ENCODE measurements at regions of chr7 and their contacts with region 1.

Region 1: GRCh38 chr7:117830422-117830954 is 42.8 kb downstream of the CTTNBP2 start:
- DNase-seq: peak in 2 of 10 donors; percentile 24 to 75

Region 2: GRCh38 chr7:117873310-117874190 is 43.1 kb after region 1 on chr7 and contains the start of gene CTTNBP2:
- intact Hi-C with region 1: loop called (anchors 5 kb)
- DNase-seq: peak; percentile 50 to 96 (median 76)

Measured in posterior cingulate gyrus (tissue), 11 donors.